ENCODE measurements at regions of chr15 and their contacts with region 1.

Region 1: GRCh38 chr15:40906091-40906990 is 12.1 kb downstream of the VPS18 start:
- DNase-seq: peak; percentile 65
- H3K4me3 Mint-ChIP-seq: peak overlapping the region; percentile 64
- H3K27ac Mint-ChIP-seq: peak overlapping the region; percentile 86
- H3K4me1 Mint-ChIP-seq: peaks cover 49% of the 10 kb centered on the region
- H3K27me3 Mint-ChIP-seq: no peaks in the 10 kb centered on the region

Region 2: GRCh38 chr15:40743921-40744814 is 162.2 kb before region 1 on chr15:
- CTCF ChIA-PET with region 1: no interaction called
- POLR2A ChIA-PET with region 1: no interaction called
- DNase-seq: peak; percentile 74
- H3K4me3 Mint-ChIP-seq: peak overlapping the region; percentile 26
- H3K27ac Mint-ChIP-seq: peak overlapping the region; percentile 92
- H3K4me1 Mint-ChIP-seq: peaks cover 47% of the 10 kb centered on the region
- H3K27me3 Mint-ChIP-seq: no peaks in the 10 kb centered on the region

Region 3: GRCh38 chr15:40814901-40815670 is 91.3 kb before region 1 on chr15:
- CTCF ChIA-PET with region 1: no interaction called
- POLR2A ChIA-PET with region 1: no interaction called
- DNase-seq: no peak
- H3K4me3 Mint-ChIP-seq: no peak overlapping the region
- H3K27ac Mint-ChIP-seq: no peak overlapping the region
- H3K4me1 Mint-ChIP-seq: no peaks in the 10 kb centered on the region
- H3K27me3 Mint-ChIP-seq: peaks cover 3% of the 10 kb centered on the region

Region 4: DNA sequence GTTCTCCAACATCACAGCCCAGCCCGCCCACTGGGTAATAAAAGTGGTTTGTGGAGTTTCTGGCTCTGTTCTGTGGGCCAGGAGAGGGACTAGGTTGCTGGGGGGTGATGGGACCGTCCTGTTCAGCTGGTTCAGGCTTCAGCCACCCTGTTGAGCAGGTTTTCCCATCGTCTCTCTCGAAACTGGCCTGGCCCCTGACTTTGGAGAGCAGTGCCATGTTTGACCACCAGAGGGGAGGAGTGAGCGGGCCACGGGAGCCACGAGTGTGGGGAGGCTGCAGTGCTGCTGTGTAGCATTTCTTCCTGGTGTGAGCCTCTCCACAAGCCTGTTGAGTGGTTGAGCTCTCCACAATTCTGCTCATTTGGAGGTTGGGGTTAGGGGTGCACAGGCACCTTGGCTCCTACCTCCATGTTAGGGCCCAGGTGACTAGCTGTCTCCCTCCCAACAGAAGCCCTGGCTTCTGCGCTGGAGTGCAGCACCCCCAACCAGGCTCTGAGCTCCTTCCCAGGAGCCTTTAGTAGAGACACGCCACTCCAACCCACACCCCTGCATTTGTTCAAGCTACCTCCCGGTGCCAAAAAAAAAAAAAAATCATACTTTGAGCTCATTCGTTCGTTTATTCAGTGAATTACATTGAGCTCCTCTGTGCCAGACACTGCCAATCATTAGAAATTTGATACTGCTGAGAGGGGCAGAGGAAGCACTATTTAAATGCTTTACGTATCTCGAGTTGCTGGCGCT is 48.6 kb before region 1 on chr15:
- CTCF ChIA-PET with region 1: interaction called, 17 read pairs
- POLR2A ChIA-PET with region 1: no interaction called
- DNase-seq: peak; percentile 83
- H3K4me3 Mint-ChIP-seq: no peak overlapping the region
- H3K27ac Mint-ChIP-seq: peak overlapping the region; percentile 39
- H3K4me1 Mint-ChIP-seq: peaks cover 19% of the 10 kb centered on the region
- H3K27me3 Mint-ChIP-seq: peaks cover 5% of the 10 kb centered on the region

Region 5: DNA sequence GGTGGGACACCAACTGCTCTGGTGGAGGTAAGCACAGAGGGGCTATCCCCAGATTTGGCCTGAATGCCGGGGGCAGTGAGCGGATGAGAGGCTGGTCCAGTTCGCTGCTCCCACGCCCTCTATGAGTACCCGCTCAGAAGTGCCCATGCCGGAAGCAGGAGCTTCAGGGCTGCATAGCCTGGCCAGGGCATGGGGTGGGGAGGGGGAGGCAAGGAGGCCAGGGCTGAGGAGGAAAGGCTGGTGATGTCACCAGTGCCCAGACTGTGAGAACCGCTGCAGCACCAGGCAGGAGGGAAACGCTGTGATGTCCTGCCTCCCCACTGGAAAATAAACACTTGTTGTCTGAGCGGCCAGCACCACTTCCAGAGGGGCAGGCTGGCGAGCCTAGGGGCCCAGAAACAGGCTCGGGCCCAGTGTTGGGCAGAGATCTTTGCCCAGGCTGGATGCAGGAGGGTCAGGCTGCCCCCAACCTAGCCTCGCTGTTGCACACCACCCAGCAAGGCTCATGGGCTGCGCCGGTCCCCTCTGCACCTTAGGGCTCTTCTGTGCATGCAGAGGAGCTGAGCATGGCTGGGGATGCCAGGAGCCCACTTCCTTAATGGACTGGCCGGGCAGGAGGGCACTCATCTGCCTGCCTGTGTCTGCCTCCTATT is 11.9 kb after region 1 on chr15:
- CTCF ChIA-PET with region 1: interaction called, 33 read pairs
- POLR2A ChIA-PET with region 1: no interaction called
- DNase-seq: no peak
- H3K4me3 Mint-ChIP-seq: no peak overlapping the region
- H3K27ac Mint-ChIP-seq: no peak overlapping the region
- H3K4me1 Mint-ChIP-seq: no peaks in the 10 kb centered on the region
- H3K27me3 Mint-ChIP-seq: peaks cover 9% of the 10 kb centered on the region

Region 6: DNA sequence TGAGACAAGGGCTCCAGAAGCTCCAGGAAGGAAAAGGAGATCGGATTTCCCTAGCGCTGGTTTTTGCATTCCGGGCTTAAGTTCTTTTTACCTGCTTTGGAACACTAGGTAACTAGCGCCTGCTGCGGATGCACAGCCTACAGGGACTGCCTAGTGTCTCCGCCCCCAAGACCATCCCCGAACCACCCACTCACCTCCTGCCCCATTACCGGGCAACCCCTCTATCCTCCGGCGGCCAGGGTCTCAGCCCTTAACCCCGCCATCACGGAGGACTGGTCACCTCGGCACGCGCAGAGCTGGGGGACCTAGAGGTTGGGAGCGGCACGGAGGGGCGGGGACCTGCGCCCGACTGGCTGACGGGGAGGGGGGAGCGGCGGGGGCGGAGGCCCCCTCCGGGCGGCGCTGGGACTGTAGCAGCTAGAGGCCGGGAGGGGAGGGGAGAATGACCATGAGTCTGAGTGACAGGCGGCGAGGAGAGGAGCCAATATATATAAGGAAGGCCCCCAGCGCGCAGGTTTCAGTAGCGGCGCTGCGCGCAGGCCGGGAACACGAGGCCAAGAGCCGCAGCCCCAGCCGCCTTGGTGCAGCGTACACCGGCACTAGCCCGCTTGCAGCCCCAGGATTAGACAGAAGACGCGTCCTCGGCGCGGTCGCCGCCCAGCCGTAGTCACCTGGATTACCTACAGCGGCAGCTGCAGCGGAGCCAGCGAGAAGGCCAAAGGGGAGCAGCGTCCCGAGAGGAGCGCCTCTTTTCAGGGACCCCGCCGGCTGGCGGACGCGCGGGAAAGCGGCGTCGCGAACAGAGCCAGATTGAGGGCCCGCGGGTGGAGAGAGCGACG is 22.7 kb after region 1 on chr15 and contains the start of gene DLL4:
- CTCF ChIA-PET with region 1: interaction called, 22 read pairs
- POLR2A ChIA-PET with region 1: no interaction called
- DNase-seq: peak; percentile 51
- H3K4me3 Mint-ChIP-seq: peak within 1 kb of the TSS; percentile 60
- H3K27ac Mint-ChIP-seq: no peak within 1 kb of the TSS
- H3K4me1 Mint-ChIP-seq: peaks cover 46% of the 10 kb centered on the region
- H3K27me3 Mint-ChIP-seq: peaks cover 82% of the 10 kb centered on the region
- total RNA-seq, gene DLL4: not detected

Region 7: GRCh38 chr15:41180206-41180789 is 274.0 kb after region 1 on chr15:
- CTCF ChIA-PET with region 1: interaction called, 38 read pairs
- POLR2A ChIA-PET with region 1: no interaction called
- DNase-seq: no peak
- H3K4me3 Mint-ChIP-seq: no peak overlapping the region
- H3K27ac Mint-ChIP-seq: no peak overlapping the region
- H3K4me1 Mint-ChIP-seq: peaks cover 3% of the 10 kb centered on the region
- H3K27me3 Mint-ChIP-seq: no peaks in the 10 kb centered on the region